ENCODE measurements at regions of chr3 and their contacts with region 1.

Region 1: GRCh38 chr3:108818404-108818803 is 4.2 kb upstream of the TRAT1 start:
- DNase-seq: peak; percentile 42 to 78 (median 52)
- H3K4me3 ChIP-seq: no peak overlapping the region
- H3K4me3 Mint-ChIP-seq: peak overlapping the region in 1 of 7 donors; percentile 2
- H3K27ac ChIP-seq: no peak overlapping the region
- H3K27ac Mint-ChIP-seq: peak overlapping the region in 7 of 8 donors; percentile 3 to 76 (median 34)
- H3K4me1 ChIP-seq: peaks cover 34% of the 10 kb centered on the region
- H3K4me1 Mint-ChIP-seq: peaks cover 23 to 42% (median 39%) of the 10 kb centered on the region in 3 donors
- H3K27me3 ChIP-seq: no peaks in the 10 kb centered on the region
- H3K27me3 Mint-ChIP-seq: no peaks in the 10 kb centered on the region

Region 2: DNA sequence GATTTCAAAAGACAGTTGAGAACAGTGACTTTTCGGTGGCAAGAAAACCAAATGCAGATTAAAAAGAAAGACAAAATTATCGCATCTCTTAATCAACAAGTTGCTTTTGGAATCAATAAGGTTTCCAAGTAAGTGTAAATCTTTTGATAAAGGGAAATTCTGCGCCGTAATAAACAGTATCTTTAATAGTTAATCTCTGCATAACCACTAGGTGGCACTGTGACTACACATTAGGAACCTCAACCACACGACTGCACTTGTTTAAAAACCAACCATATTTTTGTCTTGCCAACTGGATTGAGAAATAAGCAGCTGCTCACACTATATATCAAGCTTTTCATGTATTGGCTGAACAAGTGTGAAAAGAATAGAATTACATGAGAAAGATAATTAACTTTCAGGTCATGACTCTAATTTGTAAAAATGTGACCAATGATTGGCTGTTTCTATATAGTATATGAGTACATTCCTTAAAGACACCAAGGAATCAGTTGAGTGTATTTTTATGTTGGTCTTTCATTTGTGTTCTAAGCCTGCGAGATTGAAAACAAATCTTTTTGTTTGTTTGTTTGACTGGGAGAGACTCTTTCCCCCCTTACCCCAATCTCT is 156.2 kb before region 1 on chr3:
- CTCF ChIA-PET with region 1: interaction called, 35 read pairs
- POLR2A ChIA-PET with region 1: no interaction called
- DNase-seq: peak in 4 of 5 donors; percentile 27 to 63 (median 60)
- H3K4me3 ChIP-seq: no peak overlapping the region
- H3K4me3 Mint-ChIP-seq: peak overlapping the region in 1 of 7 donors; percentile 27
- H3K27ac ChIP-seq: no peak overlapping the region
- H3K27ac Mint-ChIP-seq: peak overlapping the region in 2 of 8 donors; percentile 35
- H3K4me1 ChIP-seq: no peaks in the 10 kb centered on the region
- H3K4me1 Mint-ChIP-seq: peaks cover 10 to 20% (median 13%) of the 10 kb centered on the region in 3 donors
- H3K27me3 ChIP-seq: no peaks in the 10 kb centered on the region
- H3K27me3 Mint-ChIP-seq: no peaks in the 10 kb centered on the region

Region 3: DNA sequence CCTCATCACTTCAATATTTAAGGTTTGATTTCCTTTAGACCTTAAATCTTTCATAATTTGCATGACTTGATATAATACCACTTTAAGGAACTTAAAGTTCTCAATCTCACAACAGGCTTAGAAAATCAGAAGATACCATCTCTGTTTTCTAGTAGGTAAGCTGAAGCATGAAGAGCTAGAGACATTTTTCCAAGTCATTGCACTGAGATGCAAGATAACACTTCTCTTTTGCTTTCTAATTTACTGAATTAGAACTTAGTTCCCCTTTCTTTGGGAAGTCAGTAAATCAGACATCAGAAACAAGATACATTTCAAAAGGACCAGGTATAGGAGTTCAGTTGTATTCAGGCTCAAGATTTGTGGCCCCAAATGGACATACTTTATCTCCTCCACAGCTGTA is 149.2 kb before region 1 on chr3:
- CTCF ChIA-PET with region 1: interaction called, 35 read pairs
- POLR2A ChIA-PET with region 1: no interaction called
- DNase-seq: no peak
- H3K4me3 ChIP-seq: no peak overlapping the region
- H3K4me3 Mint-ChIP-seq: no peak overlapping the region
- H3K27ac ChIP-seq: no peak overlapping the region
- H3K27ac Mint-ChIP-seq: no peak overlapping the region
- H3K4me1 ChIP-seq: no peaks in the 10 kb centered on the region
- H3K4me1 Mint-ChIP-seq: peaks cover 2 to 14% (median 5%) of the 10 kb centered on the region in 3 donors
- H3K27me3 ChIP-seq: no peaks in the 10 kb centered on the region
- H3K27me3 Mint-ChIP-seq: no peaks in the 10 kb centered on the region

Region 4: GRCh38 chr3:108791473-108791872 is 26.9 kb before region 1 on chr3:
- CTCF ChIA-PET with region 1: no interaction called
- POLR2A ChIA-PET with region 1: no interaction called
- DNase-seq: no peak
- H3K4me3 ChIP-seq: no peak overlapping the region
- H3K4me3 Mint-ChIP-seq: no peak overlapping the region
- H3K27ac ChIP-seq: no peak overlapping the region
- H3K27ac Mint-ChIP-seq: peak overlapping the region in 1 of 8 donors; percentile 66
- H3K4me1 ChIP-seq: no peaks in the 10 kb centered on the region
- H3K4me1 Mint-ChIP-seq: no peaks in the 10 kb centered on the region
- H3K27me3 ChIP-seq: no peaks in the 10 kb centered on the region
- H3K27me3 Mint-ChIP-seq: peaks cover 0 to 3% of the 10 kb centered on the region in 2 donors

Region 5: GRCh38 chr3:108806316-108806715 is 12.1 kb before region 1 on chr3:
- CTCF ChIA-PET with region 1: interaction called, 17 read pairs
- POLR2A ChIA-PET with region 1: interaction called, 4 read pairs
- DNase-seq: peak in 4 of 5 donors; percentile 10 to 82 (median 73)
- H3K4me3 ChIP-seq: peak overlapping the region; percentile 6
- H3K4me3 Mint-ChIP-seq: peak overlapping the region; percentile 5 to 78 (median 33)
- H3K27ac ChIP-seq: peak overlapping the region; percentile 19
- H3K27ac Mint-ChIP-seq: peak overlapping the region; percentile 35 to 95 (median 80)
- H3K4me1 ChIP-seq: peaks cover 20% of the 10 kb centered on the region
- H3K4me1 Mint-ChIP-seq: peaks cover 31 to 36% (median 33%) of the 10 kb centered on the region in 3 donors
- H3K27me3 ChIP-seq: no peaks in the 10 kb centered on the region
- H3K27me3 Mint-ChIP-seq: no peaks in the 10 kb centered on the region

Region 6: GRCh38 chr3:108835101-108835500 is 16.7 kb after region 1 on chr3:
- CTCF ChIA-PET with region 1: interaction called, 57 read pairs
- POLR2A ChIA-PET with region 1: interaction called, 10 read pairs
- DNase-seq: peak in 3 of 5 donors; percentile 52 to 58 (median 53)
- H3K4me3 ChIP-seq: peak overlapping the region; percentile 46
- H3K4me3 Mint-ChIP-seq: peak overlapping the region; percentile 81 to 89 (median 83)
- H3K27ac ChIP-seq: no peak overlapping the region
- H3K27ac Mint-ChIP-seq: peak overlapping the region; percentile 88 to 97 (median 93)
- H3K4me1 ChIP-seq: peaks cover 83% of the 10 kb centered on the region
- H3K4me1 Mint-ChIP-seq: peaks cover 86 to 95% (median 93%) of the 10 kb centered on the region in 3 donors
- H3K27me3 ChIP-seq: no peaks in the 10 kb centered on the region
- H3K27me3 Mint-ChIP-seq: no peaks in the 10 kb centered on the region

Region 7: GRCh38 chr3:108914774-108915641 is 96.6 kb after region 1 on chr3:
- CTCF ChIA-PET with region 1: interaction called, 18 read pairs
- POLR2A ChIA-PET with region 1: no interaction called
- DNase-seq: peak; percentile 28 to 75 (median 62)
- H3K4me3 ChIP-seq: no peak overlapping the region
- H3K4me3 Mint-ChIP-seq: peak overlapping the region in 6 of 7 donors; percentile 2 to 60 (median 53)
- H3K27ac ChIP-seq: no peak overlapping the region
- H3K27ac Mint-ChIP-seq: peak overlapping the region in 1 of 8 donors; percentile 13
- H3K4me1 ChIP-seq: peaks cover 6% of the 10 kb centered on the region
- H3K4me1 Mint-ChIP-seq: peaks cover 14 to 21% (median 18%) of the 10 kb centered on the region in 3 donors
- H3K27me3 ChIP-seq: no peaks in the 10 kb centered on the region
- H3K27me3 Mint-ChIP-seq: peaks cover 2 to 8% of the 10 kb centered on the region in 2 donors